Naive thymus-derived CD4-positive, alpha-beta T cell (primary cell): ENCODE measurements at regions of chr18 and their contacts with region 1.

Region 1: DNA sequence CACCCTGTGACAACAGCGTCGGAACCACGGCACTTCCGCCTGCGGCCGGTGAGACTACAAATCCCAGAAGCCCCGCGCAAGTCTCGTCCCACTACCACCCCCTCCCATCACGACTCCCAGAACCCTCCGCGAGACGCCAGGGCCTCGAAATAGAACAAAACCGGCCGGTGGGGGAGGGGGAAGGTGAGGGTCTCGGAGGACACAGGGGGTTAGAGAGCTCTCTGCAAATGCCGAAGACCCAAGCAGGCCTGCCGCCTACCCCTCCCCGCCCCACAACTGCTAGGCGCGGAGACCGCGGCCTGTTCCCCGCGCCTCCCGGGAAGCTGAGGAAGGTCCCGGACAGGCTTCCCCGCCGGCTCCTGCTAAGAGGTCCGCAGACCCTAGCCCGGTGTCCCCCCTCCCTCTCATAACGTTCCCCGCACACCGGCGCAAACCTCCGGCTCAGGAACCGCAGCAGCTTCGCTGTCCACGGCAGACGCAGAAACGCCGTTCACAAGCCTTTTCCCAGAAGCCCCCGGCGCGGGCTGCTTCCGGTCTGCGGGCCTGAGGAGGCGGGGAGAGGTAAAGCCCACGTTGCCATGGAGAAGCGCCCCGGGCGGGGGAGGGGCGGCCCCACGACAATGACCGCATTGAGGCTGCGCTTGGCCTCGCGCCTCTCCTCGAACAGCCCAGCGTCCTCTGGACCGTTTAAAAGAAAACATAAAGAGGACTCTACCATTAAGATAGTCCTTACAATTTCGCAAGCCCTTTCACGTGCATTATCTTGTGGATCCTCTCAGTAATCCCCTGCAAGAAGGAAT is at the start of gene ZNF24:
- DNase-seq: peak; percentile 83 to 92 (median 87)
- ATAC-seq: peak; percentile 92
- H3K4me3 ChIP-seq: peak within 1 kb of the TSS; percentile 96
- H3K4me3 Mint-ChIP-seq: peak within 1 kb of the TSS; percentile 93 to 100 (median 98)
- H3K27ac ChIP-seq: peak within 1 kb of the TSS; percentile 100
- H3K27ac Mint-ChIP-seq: peak within 1 kb of the TSS; percentile 91 to 98 (median 98)
- H3K4me1 ChIP-seq: peaks cover 23 to 25% of the 10 kb centered on the region in 2 donors
- H3K4me1 Mint-ChIP-seq: peaks cover 30 to 56% (median 45%) of the 10 kb centered on the region in 7 donors
- H3K27me3 ChIP-seq: no peaks in the 10 kb centered on the region
- H3K27me3 Mint-ChIP-seq: no peaks in the 10 kb centered on the region
- total RNA-seq, gene ZNF24: 55.6 to 98.1 (median 80.8) TPM

Region 2: GRCh38 chr18:34867520-34867919 is 476.6 kb before region 1 on chr18:
- CTCF ChIA-PET with region 1: no interaction called
- POLR2A ChIA-PET with region 1: no interaction called
- intact Hi-C with region 1: loop called in 1 of 2 experiments (anchors 5 kb)
- DNase-seq: no peak
- ATAC-seq: no peak
- H3K4me3 ChIP-seq: no peak overlapping the region
- H3K4me3 Mint-ChIP-seq: no peak overlapping the region
- H3K27ac ChIP-seq: no peak overlapping the region
- H3K27ac Mint-ChIP-seq: no peak overlapping the region
- H3K4me1 ChIP-seq: no peaks in the 10 kb centered on the region
- H3K4me1 Mint-ChIP-seq: peaks cover 0 to 24% (median 9%) of the 10 kb centered on the region in 7 donors
- H3K27me3 ChIP-seq: no peaks in the 10 kb centered on the region
- H3K27me3 Mint-ChIP-seq: peaks cover 0 to 10% (median 0%) of the 10 kb centered on the region in 5 donors

Region 3: DNA sequence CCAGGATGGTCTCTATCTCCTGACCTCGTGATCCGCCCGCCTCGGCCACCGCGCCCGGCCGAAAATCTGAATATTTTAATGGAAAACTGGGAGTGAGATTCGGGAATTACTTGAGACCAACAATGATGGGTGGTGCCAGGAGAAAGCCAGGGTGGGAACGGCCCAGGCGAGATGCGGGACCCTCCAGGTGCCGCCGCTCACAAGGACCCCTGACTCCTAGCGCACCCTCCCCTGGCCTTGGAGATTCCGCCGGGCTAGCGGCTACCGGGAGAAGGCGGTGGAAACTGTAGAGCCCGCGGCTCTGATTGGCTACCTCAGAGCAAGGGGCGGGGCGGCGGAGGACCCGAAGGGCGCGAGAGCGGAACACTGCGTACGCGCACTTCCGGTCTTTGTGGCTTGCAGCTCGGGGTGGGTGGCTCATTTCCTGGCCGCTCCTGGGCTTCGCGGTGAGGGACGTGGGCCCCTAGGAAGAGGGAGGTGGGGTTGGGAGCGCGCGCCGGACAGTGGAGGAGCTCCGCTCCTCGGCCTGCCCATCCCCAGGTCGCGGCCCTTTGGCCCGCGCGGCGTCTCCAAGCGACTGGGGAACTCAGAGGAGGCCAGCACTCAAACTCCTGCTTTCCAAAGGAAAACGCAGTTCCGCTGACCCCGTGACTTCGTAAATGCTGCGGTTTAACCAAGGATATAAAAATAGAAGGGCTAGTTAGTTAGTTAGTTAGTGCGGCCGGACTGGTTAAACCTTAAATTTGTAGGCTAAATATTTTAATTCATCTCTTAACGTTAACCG is 103.3 kb before region 1 on chr18 and contains the start of gene ZNF397:
- CTCF ChIA-PET with region 1: interaction called, 3 read pairs
- POLR2A ChIA-PET with region 1: interaction called, 7 read pairs
- intact Hi-C with region 1: loop called (anchors 1 kb)
- DNase-seq: peak; percentile 87 to 96 (median 91)
- ATAC-seq: peak; percentile 99
- H3K4me3 ChIP-seq: peak within 1 kb of the TSS; percentile 94
- H3K4me3 Mint-ChIP-seq: peak within 1 kb of the TSS; percentile 88 to 98 (median 96)
- H3K27ac ChIP-seq: peak within 1 kb of the TSS; percentile 97
- H3K27ac Mint-ChIP-seq: peak within 1 kb of the TSS; percentile 90 to 99 (median 98)
- H3K4me1 ChIP-seq: peaks cover 9 to 17% of the 10 kb centered on the region in 2 donors
- H3K4me1 Mint-ChIP-seq: peaks cover 16 to 41% (median 31%) of the 10 kb centered on the region in 7 donors
- H3K27me3 ChIP-seq: no peaks in the 10 kb centered on the region
- H3K27me3 Mint-ChIP-seq: no peaks in the 10 kb centered on the region
- total RNA-seq, gene ZNF397: 12.1 to 59.1 (median 27.6) TPM

Region 4: DNA sequence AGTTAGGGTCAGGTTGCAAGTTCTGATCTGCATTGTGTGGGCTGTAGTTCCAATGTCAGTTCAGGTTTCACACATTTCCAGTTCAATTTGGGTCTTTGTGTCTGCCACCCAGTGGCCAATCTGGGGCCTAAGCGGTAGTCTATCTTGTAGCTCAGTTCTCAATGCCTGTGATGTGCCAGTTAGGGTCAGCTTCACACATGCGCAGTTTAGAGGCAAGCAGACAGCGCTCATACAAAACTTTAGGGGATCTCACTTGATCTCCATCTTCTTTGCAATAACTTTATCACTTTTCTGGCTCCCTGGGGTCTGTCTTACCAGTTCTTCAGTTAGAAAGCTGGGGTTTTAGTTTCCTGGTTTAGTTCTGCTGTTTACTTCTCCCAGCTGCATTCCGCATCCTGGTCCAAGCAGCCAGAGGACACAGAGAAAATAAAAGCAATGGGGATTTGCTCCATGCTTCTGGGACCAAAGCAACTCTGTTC is 11.0 kb after region 1 on chr18:
- CTCF ChIA-PET with region 1: interaction called, 7 read pairs
- POLR2A ChIA-PET with region 1: interaction called, 9 read pairs
- intact Hi-C with region 1: loop called in 1 of 2 experiments (anchors 1 kb)
- DNase-seq: peak; percentile 16 to 67 (median 49)
- ATAC-seq: peak; percentile 98
- H3K4me3 ChIP-seq: no peak overlapping the region
- H3K4me3 Mint-ChIP-seq: no peak overlapping the region
- H3K27ac ChIP-seq: no peak overlapping the region
- H3K27ac Mint-ChIP-seq: peak overlapping the region in 1 of 9 donors; percentile 21
- H3K4me1 ChIP-seq: no peaks in the 10 kb centered on the region
- H3K4me1 Mint-ChIP-seq: peaks cover 0 to 7% (median 0%) of the 10 kb centered on the region in 7 donors
- H3K27me3 ChIP-seq: no peaks in the 10 kb centered on the region
- H3K27me3 Mint-ChIP-seq: peaks cover 0 to under 1% (median 0%) of the 10 kb centered on the region in 5 donors

Region 5: DNA sequence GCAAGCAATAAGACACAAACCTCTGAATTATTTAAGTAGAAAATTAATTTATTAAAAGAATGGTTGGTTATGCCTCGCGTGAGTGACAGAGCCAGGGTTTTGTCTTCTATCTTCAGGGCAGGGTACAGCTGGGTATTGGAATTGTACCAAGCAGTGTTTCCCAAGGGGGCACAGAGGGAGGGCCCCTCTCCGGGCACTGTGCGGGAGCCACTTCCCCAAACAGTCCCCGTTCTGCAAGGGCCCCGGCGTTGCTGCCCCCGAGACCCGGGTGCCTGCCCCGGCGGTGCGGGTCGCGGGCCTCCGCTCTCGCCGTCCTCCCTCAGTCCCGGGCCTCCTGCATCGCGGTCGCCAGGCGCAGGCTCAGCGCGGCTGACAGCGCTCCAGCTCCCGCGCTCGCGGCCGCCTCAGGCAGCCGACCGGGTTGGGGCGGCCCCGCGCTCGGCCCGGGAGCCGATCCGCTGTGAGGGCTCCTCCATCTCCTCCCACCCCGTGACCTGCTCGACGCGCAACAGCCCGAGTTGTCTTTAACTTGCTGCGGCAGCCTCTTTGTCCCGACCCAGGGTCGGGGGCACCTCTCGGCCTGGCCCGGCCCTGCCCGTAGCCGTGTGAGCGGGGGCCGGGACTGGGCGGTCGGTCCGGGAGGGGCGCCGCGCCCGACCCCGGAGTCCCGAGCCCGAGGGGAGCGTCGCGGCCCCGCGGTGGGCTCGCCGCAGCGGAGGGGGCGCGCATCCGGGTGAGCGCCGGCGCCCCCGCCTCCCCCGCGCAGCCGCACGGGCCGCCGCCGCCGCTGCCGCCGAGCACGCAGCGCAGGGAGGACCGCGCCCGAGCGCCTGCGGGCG is 236.8 kb after region 1 on chr18:
- CTCF ChIA-PET with region 1: no interaction called
- POLR2A ChIA-PET with region 1: no interaction called
- intact Hi-C with region 1: loop called in 1 of 2 experiments (anchors 2 kb)
- DNase-seq: peak; percentile 54 to 70 (median 63)
- ATAC-seq: peak; percentile 84
- H3K4me3 ChIP-seq: peak overlapping the region; percentile 61
- H3K4me3 Mint-ChIP-seq: peak overlapping the region; percentile 60 to 80 (median 72)
- H3K27ac ChIP-seq: peak overlapping the region; percentile 77
- H3K27ac Mint-ChIP-seq: peak overlapping the region in 5 of 9 donors; percentile 37 to 80 (median 63)
- H3K4me1 ChIP-seq: peaks cover 11% of the 10 kb centered on the region in 2 donors
- H3K4me1 Mint-ChIP-seq: peaks cover 13 to 39% (median 28%) of the 10 kb centered on the region in 7 donors
- H3K27me3 ChIP-seq: no peaks in the 10 kb centered on the region
- H3K27me3 Mint-ChIP-seq: peaks cover 0 to 18% (median 7%) of the 10 kb centered on the region in 5 donors

Region 6: GRCh38 chr18:36129300-36130038 is 785.3 kb after region 1 on chr18 and contains the starts of genes ELP2 and SLC39A6:
- CTCF ChIA-PET with region 1: no interaction called
- POLR2A ChIA-PET with region 1: no interaction called
- intact Hi-C with region 1: loop called (anchors 1 to 2 kb)
- DNase-seq: peak; percentile 89 to 98 (median 95)
- ATAC-seq: peak; percentile 94
- H3K4me3 ChIP-seq: peak within 1 kb of the TSS; percentile 99
- H3K4me3 Mint-ChIP-seq: peak within 1 kb of the TSS; percentile 87 to 98 (median 95)
- H3K27ac ChIP-seq: peak within 1 kb of the TSS; percentile 96
- H3K27ac Mint-ChIP-seq: peak within 1 kb of the TSS; percentile 93 to 99 (median 98)
- H3K4me1 ChIP-seq: peaks cover 33 to 35% of the 10 kb centered on the region in 2 donors
- H3K4me1 Mint-ChIP-seq: peaks cover 39 to 81% (median 61%) of the 10 kb centered on the region in 7 donors
- H3K27me3 ChIP-seq: no peaks in the 10 kb centered on the region
- H3K27me3 Mint-ChIP-seq: no peaks in the 10 kb centered on the region
- total RNA-seq, gene ELP2: 79.3 to 177 (median 150) TPM
- total RNA-seq, gene SLC39A6: 12.1 to 25.2 (median 16.6) TPM